ENCODE measurements at regions of chr15 and their contacts with region 1.

Region 1: GRCh38 chr15:63504247-63504978 is at the start of gene USP3:
- DNase-seq: peak; percentile 93 to 96
- ATAC-seq: peak; percentile 69 to 90 (median 77)
- H3K4me3 ChIP-seq: peak within 1 kb of the TSS; percentile 85
- H3K4me3 Mint-ChIP-seq: peak within 1 kb of the TSS; percentile 96
- H3K27ac ChIP-seq: peak within 1 kb of the TSS; percentile 96
- H3K27ac Mint-ChIP-seq: peak within 1 kb of the TSS; percentile 87 to 93
- H3K4me1 ChIP-seq: peaks cover 46% of the 10 kb centered on the region
- H3K4me1 Mint-ChIP-seq: peaks cover 64 to 84% of the 10 kb centered on the region in 2 donors
- H3K27me3 ChIP-seq: no peaks in the 10 kb centered on the region
- H3K27me3 Mint-ChIP-seq: no peaks in the 10 kb centered on the region
- CTCF ChIP-seq: peak; percentile 40
- total RNA-seq, gene USP3: 163 to 187 (median 169) TPM

Region 2: DNA sequence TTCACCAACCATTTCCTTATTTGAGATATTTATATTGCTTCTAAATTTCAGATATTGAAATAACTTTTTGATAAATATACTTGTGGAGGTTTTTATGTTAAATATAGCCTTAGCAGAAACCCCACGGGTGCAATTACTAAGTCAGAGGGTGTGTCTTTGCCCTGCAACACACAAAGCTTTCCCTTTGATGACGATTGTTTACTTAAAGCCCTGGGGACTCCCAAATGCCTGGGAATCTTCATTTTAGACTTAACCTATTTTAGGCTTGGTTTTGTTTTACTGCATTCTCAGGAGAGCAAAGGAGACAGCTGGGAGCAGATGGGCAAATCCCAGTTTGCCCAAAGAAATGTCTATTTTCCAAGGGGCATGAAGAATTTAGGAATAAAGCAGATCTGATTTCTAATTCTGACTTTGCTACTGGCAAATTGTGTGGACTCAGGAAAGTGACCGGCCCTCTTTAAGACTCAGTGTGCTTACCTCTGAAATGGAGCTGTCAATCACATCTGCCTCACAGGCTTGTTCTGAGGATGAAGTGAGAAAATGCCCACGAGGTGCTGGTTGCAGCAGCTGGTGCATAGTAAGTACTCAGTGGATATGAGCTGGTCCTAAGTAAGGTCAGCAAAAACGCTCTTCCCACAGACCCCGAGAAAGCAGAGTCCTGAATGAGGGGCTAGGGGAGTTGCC is 73.5 kb before region 1 on chr15:
- intact Hi-C with region 1: no loop called
- DNase-seq: no peak
- ATAC-seq: no peak
- H3K4me3 ChIP-seq: no peak overlapping the region
- H3K4me3 Mint-ChIP-seq: no peak overlapping the region
- H3K27ac ChIP-seq: no peak overlapping the region
- H3K27ac Mint-ChIP-seq: no peak overlapping the region
- H3K4me1 ChIP-seq: no peaks in the 10 kb centered on the region
- H3K4me1 Mint-ChIP-seq: no peaks in the 10 kb centered on the region
- H3K27me3 ChIP-seq: no peaks in the 10 kb centered on the region
- H3K27me3 Mint-ChIP-seq: peaks cover 0 to 2% of the 10 kb centered on the region in 2 donors
- CTCF ChIP-seq: no peak

Region 3: DNA sequence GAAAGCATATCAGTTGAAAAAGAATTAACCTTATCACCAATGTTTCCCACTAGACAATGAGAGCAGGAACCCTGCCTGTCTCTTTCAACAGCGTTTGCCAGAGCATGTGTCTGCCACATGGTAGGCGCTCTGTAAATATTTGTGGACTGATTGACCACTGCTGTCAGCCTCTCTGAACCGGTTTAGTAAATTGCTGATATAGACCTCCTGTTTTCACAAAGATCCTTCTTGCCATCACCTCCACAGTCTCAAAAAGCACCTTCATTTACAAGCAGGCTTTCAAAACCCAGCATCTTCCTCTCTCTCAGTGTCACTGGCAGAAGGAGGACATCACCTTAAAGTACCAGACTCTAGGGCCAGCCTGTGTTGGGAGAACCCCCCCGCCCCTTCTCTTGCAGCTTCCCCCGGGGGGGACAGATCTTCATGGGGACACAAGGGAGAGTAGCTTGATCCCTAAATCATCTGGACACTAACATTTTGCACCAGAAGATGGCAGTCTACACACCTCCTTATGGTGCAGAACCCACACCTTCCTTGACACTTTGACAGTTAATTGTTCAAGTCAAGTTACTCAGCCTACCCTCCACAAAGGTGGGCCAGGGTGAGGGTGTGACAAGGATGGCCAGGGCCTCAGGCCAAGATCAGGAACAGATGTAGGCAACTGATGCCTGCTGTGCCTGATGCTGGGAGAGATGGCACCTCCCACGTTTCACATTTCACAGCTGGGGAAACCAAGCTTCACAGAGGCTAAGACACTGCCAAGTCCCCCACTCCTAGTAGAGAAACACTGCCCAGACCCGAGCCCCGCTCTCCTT is 37.8 kb before region 1 on chr15:
- intact Hi-C with region 1: loop called (anchors 5 kb)
- DNase-seq: peak; percentile 26 to 89
- ATAC-seq: peak; percentile 86 to 97 (median 97)
- H3K4me3 ChIP-seq: no peak overlapping the region
- H3K4me3 Mint-ChIP-seq: no peak overlapping the region
- H3K27ac ChIP-seq: no peak overlapping the region
- H3K27ac Mint-ChIP-seq: no peak overlapping the region
- H3K4me1 ChIP-seq: peaks cover 6% of the 10 kb centered on the region
- H3K4me1 Mint-ChIP-seq: peaks cover 0 to 9% of the 10 kb centered on the region in 2 donors
- H3K27me3 ChIP-seq: no peaks in the 10 kb centered on the region
- H3K27me3 Mint-ChIP-seq: peaks cover 6 to 23% of the 10 kb centered on the region in 2 donors
- CTCF ChIP-seq: peak; percentile 74

Region 4: DNA sequence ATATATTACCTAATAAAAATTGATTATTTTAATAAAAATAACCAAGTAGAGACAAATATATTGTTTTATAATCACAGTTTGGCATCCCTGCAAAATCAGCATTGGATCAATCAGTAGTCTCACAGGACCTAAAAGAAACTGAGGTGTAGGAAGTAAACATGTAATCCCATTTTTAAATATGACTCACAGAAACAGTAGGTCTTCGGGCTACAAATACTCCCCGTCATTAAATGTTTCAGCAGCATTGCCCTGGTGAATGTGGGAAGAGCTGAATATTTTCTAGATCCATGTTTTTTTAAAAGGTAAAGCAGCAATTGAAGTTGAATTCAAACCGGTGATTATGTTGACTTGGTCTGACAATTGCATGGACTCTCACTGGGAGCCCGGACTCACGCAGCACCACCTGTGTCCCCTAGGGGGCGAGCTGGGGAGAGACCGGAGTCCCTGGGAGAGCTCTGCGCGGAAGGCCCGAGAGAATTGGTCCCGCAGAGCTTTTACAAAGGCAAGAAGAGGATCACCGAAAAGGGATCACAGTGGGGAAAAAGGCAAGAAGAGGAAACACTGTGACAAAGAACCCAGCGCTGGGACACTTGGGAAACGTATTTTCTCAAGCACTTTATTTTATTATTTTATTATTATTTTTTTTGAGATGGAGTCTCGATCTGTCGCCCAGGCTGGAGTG is 17.2 kb before region 1 on chr15:
- intact Hi-C with region 1: loop called (anchors 1 kb)
- DNase-seq: peak; percentile 88 to 93
- ATAC-seq: peak; percentile 96 to 100 (median 99)
- H3K4me3 ChIP-seq: no peak overlapping the region
- H3K4me3 Mint-ChIP-seq: peak overlapping the region; percentile 72
- H3K27ac ChIP-seq: no peak overlapping the region
- H3K27ac Mint-ChIP-seq: peak overlapping the region in 1 of 2 donors; percentile 75
- H3K4me1 ChIP-seq: peaks cover 42% of the 10 kb centered on the region
- H3K4me1 Mint-ChIP-seq: peaks cover 17 to 23% of the 10 kb centered on the region in 2 donors
- H3K27me3 ChIP-seq: no peaks in the 10 kb centered on the region
- H3K27me3 Mint-ChIP-seq: no peaks in the 10 kb centered on the region
- CTCF ChIP-seq: peak; percentile 96

Region 5: DNA sequence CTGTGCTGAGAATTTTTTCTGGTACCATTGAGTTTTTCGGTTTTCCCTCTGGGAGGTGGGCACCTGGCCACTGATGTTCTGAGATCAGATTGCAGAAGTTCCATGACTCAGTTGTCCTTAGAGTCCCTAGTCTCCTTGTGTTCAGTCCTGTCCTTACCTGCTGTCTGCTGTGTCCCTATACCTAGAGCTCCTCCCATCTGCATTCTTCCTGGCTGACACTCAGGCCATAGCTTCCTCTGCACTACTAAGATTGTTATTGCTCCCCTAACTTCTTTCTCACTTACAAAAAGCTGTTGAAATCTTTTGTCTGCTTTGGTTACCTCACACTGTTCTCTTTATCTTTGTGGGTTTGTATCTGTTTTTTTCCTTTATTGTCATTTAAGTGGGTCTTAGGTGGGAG is 13.2 kb after region 1 on chr15:
- intact Hi-C with region 1: loop called (anchors 2 kb)
- DNase-seq: peak in 1 of 2 donors; percentile 55
- ATAC-seq: peak; percentile 83 to 89 (median 88)
- H3K4me3 ChIP-seq: no peak overlapping the region
- H3K4me3 Mint-ChIP-seq: peak overlapping the region; percentile 71
- H3K27ac ChIP-seq: peak overlapping the region; percentile 19
- H3K27ac Mint-ChIP-seq: peak overlapping the region; percentile 74 to 79
- H3K4me1 ChIP-seq: peaks cover 26% of the 10 kb centered on the region
- H3K4me1 Mint-ChIP-seq: peaks cover 79 to 80% of the 10 kb centered on the region in 2 donors
- H3K27me3 ChIP-seq: no peaks in the 10 kb centered on the region
- H3K27me3 Mint-ChIP-seq: no peaks in the 10 kb centered on the region
- CTCF ChIP-seq: no peak

Region 6: GRCh38 chr15:63600616-63601025 is 96.2 kb after region 1 on chr15:
- intact Hi-C with region 1: loop called (anchors 5 kb)
- DNase-seq: peak; percentile 90 to 98
- ATAC-seq: peak; percentile 89 to 96 (median 90)
- H3K4me3 ChIP-seq: peak overlapping the region; percentile 79
- H3K4me3 Mint-ChIP-seq: peak overlapping the region; percentile 92
- H3K27ac ChIP-seq: peak overlapping the region; percentile 70
- H3K27ac Mint-ChIP-seq: peak overlapping the region; percentile 77 to 84
- H3K4me1 ChIP-seq: peaks cover 34% of the 10 kb centered on the region
- H3K4me1 Mint-ChIP-seq: peaks cover 33 to 56% of the 10 kb centered on the region in 2 donors
- H3K27me3 ChIP-seq: no peaks in the 10 kb centered on the region
- H3K27me3 Mint-ChIP-seq: no peaks in the 10 kb centered on the region
- CTCF ChIP-seq: no peak

Region 7: DNA sequence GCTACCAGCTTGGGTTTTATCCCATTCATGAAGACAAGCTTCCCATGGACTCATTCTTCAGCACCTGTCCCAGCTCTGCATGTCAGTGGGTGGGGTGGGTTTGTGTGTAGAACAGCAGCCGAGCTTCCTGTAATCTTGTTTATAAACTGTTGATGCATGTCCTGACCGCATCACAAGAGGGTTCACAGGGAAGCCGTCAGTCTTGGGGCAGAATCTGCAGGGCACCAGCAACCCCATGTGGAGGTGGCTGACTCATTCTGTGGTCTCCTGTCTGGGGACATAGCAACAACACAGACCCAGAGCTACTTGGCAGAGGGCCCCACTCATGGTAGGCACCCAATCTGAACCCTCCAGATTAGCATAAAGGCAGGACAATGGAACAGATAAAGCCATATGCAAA is 506.3 kb after region 1 on chr15:
- intact Hi-C with region 1: loop called (anchors 5 kb)
- DNase-seq: peak; percentile 76 to 95
- ATAC-seq: peak; percentile 86 to 96 (median 95)
- H3K4me3 ChIP-seq: no peak overlapping the region
- H3K4me3 Mint-ChIP-seq: peak overlapping the region; percentile 87
- H3K27ac ChIP-seq: peak overlapping the region; percentile 86
- H3K27ac Mint-ChIP-seq: peak overlapping the region; percentile 96 to 98
- H3K4me1 ChIP-seq: peaks cover 29% of the 10 kb centered on the region
- H3K4me1 Mint-ChIP-seq: peaks cover 39 to 40% of the 10 kb centered on the region in 2 donors
- H3K27me3 ChIP-seq: no peaks in the 10 kb centered on the region
- H3K27me3 Mint-ChIP-seq: no peaks in the 10 kb centered on the region
- CTCF ChIP-seq: no peak

Measured in natural killer cell (primary cell).